HEK293T (cell line): ENCODE measurements at regions of chr17 and their contacts with region 1.

Region 1: GRCh38 chr17:44568945-44569858 is 11.9 kb downstream of the FZD2 start:
- DNase-seq: no peak

Region 2: GRCh38 chr17:44556832-44557606 is 12.2 kb before region 1 on chr17 and contains the start of gene FZD2:
- CTCF ChIA-PET with region 1: interaction called, 3 read pairs
- POLR2A ChIA-PET with region 1: interaction called, 11 read pairs
- DNase-seq: peak; percentile 88